ENCODE measurements at regions of chr5 and their contacts with region 1.

Region 1: DNA sequence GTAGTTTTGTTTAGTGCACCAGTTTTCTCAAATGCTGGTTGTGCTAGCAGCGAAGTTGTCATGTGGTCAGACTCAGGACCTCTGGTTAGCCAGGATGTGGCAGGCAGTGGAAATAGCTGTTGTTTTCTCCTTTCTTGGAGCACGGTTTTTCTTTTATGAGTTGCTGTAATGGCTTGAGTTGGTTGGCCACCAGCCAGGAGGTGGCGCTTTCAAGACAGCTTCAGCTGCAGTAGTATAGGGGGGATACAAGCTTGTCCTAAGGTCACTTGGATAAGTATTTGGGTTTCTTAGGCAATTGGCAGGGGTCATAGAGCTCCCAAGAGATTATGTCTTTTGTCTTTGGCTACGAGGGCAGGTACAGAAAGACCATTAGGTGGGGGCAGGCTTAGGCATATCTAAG is 274.2 kb upstream of the TARS1 start:
- DNase-seq: peak; percentile 42
- ATAC-seq: peak; percentile 72
- H3K4me3 Mint-ChIP-seq: no peak overlapping the region
- H3K27ac Mint-ChIP-seq: no peak overlapping the region
- H3K4me1 Mint-ChIP-seq: no peaks in the 10 kb centered on the region
- H3K27me3 Mint-ChIP-seq: no peaks in the 10 kb centered on the region
- CTCF ChIP-seq: 0 out of 2 replicates have a peak, but pooled peaks have one; percentile 22

Region 2: DNA sequence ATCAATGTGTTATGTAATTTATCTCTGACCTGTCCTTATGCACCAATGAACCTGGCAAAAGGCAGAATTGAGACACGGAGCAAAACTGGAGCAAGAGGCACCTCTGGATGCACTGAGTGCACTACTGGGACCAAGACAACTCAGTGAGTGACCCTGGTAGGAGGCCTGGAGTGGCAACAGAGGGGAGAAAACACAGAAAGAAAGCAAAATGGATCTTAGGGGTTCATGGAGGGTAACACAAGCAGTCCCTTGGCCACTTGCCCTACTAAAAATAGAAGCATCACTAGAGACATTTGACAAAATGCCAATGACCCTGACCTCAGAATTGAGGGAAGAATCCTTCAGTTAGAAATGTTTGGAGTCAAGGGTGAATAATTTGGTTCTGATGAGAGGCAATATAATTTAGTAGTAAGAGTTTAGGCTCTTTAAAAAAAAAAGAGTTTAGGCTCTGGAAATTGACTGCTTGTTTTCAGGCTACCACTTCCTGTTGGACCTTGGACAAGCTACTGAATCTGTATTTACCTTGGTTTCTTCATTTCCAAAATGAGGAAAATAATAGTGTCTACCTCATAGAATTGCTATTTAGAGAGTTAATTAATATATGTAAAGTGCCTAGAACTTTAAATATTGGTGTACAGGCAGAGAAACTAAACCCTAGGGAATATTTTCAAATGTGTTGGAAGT is 39.3 kb after region 1 on chr5:
- CTCF ChIA-PET with region 1: no interaction called
- POLR2A ChIA-PET with region 1: no interaction called
- DNase-seq: no peak
- ATAC-seq: no peak
- H3K4me3 Mint-ChIP-seq: no peak overlapping the region
- H3K27ac Mint-ChIP-seq: no peak overlapping the region
- H3K4me1 Mint-ChIP-seq: no peaks in the 10 kb centered on the region
- H3K27me3 Mint-ChIP-seq: peaks cover 8% of the 10 kb centered on the region; the same call in 1 of the 2 replicates
- CTCF ChIP-seq: no peak

Region 3: DNA sequence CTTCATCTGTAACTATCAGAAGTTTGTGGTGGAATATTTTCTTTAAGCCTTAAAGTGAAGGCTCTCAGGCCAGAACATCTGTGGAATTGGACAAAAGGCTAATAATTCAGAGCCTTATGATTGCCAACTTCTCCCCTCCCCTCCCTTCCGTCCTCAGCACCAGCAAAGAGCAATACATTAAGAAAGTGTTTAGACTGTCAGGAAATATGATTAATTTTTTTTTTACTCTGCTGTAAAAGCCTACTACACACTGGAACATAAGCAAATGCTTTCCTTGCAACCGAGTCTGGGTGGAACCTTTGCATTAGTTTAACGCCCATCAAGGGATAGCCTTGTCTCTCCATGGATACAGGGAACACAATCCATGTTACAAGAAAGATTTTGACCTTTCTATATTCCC is 163.9 kb after region 1 on chr5:
- CTCF ChIA-PET with region 1: no interaction called
- POLR2A ChIA-PET with region 1: no interaction called
- DNase-seq: no peak
- ATAC-seq: no peak
- H3K4me3 Mint-ChIP-seq: no peak overlapping the region
- H3K27ac Mint-ChIP-seq: no peak overlapping the region
- H3K4me1 Mint-ChIP-seq: peaks cover 5% of the 10 kb centered on the region; the same call in 1 of the 2 replicates
- H3K27me3 Mint-ChIP-seq: no peaks in the 10 kb centered on the region
- CTCF ChIP-seq: no peak

Region 4: DNA sequence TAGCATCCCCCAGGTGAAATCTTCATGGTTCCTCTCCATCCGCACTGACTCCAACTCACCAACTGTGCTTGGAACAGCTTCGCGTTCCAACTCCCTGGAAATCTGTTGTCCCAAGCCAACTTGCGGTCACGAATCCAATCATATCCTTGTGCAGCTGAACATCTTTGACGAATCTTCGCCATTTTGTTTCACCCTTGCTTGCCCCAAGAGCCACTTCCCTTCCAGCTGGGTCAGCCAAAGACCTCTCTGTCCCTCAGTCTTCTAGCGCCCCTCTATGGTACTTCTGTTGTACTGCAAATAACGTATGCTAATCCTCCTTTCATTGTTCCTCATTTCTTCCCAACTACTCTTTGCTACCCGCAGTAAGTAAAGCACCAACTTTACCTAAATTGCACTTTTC is 213.2 kb after region 1 on chr5:
- CTCF ChIA-PET with region 1: interaction called, 11 read pairs
- POLR2A ChIA-PET with region 1: no interaction called
- DNase-seq: peak; percentile 36
- ATAC-seq: peak; percentile 99
- H3K4me3 Mint-ChIP-seq: no peak overlapping the region
- H3K27ac Mint-ChIP-seq: no peak overlapping the region
- H3K4me1 Mint-ChIP-seq: peaks cover 3% of the 10 kb centered on the region; the same call in 1 of the 2 replicates
- H3K27me3 Mint-ChIP-seq: peaks cover 7% of the 10 kb centered on the region
- CTCF ChIP-seq: peak; percentile 80